ENCODE measurements at regions of chr22 and their contacts with region 1.

Region 1: DNA sequence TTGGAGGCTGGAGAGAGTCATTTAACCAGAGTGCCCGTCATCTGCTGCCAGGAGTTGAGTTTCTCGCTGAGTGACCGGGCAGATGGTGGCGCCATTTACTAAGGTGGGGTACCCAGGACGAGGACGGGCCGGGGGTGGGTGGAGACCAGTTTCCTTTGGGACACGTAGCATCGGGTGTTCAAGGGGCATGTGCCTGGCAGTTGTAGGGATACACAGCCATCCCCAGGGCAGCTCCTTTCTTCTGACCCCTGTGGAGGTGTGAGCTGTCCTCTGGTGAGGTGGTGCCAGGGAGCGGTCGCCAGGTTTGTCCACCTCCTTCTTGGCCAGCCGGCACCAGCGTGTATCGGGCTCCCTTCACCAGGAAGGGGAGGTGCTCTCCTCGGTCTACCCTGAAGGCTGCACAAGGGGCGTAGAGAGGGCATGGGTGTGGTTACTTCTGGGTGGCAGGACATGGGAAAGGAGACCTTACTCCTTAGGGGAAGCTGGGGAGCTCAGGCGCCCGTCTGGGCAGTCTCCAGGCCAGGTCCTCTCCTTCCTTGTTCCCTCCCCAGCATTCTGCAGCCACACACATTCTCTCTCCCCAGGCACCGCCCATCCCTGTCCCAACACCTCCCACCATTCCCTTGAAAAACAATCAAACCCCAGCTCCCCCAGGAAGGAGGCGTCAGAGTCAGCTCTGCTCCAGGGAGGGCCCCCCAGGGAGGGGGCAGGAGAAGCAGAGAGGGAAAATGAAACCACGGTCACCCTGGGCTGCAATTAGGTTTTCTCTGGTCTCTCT is 10.3 kb upstream of the MB start:
- DNase-seq: peak; percentile 40 to 73
- ATAC-seq: peak; percentile 50 to 54 (median 51)
- H3K4me3 ChIP-seq: peak overlapping the region; percentile 42
- H3K4me3 Mint-ChIP-seq: peak overlapping the region; percentile 79
- H3K27ac ChIP-seq: no peak overlapping the region
- H3K27ac Mint-ChIP-seq: peak overlapping the region in 1 of 2 donors; percentile 81
- H3K4me1 ChIP-seq: peaks cover 23% of the 10 kb centered on the region
- H3K4me1 Mint-ChIP-seq: peaks cover 20 to 32% of the 10 kb centered on the region in 2 donors
- H3K27me3 ChIP-seq: no peaks in the 10 kb centered on the region
- H3K27me3 Mint-ChIP-seq: peaks cover 0 to 6% of the 10 kb centered on the region in 2 donors
- CTCF ChIP-seq: peak; percentile 17

Region 2: DNA sequence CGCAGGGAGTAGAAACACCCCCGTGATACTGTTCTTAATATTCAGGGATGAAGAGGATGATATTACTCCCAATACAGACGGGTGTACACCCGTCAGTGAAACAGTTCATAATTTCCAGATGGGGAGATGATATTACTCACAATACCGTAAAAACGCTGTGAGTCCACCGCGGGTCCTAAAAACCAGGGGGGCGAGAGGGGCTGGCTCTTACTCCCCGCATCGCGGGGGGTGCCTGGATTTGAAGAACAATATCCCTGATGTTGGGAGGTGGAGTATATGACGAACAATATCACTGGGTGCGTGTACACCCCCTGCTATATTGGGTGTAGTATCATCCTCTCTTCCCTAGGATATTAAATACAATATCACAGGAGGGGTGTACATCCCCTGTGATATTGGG is 69.7 kb after region 1 on chr22:
- intact Hi-C with region 1: loop called (anchors 1 kb)
- DNase-seq: no peak
- ATAC-seq: no peak
- H3K4me3 ChIP-seq: no peak overlapping the region
- H3K4me3 Mint-ChIP-seq: no peak overlapping the region
- H3K27ac ChIP-seq: no peak overlapping the region
- H3K27ac Mint-ChIP-seq: no peak overlapping the region
- H3K4me1 ChIP-seq: no peaks in the 10 kb centered on the region
- H3K4me1 Mint-ChIP-seq: no peaks in the 10 kb centered on the region
- H3K27me3 ChIP-seq: no peaks in the 10 kb centered on the region
- H3K27me3 Mint-ChIP-seq: no peaks in the 10 kb centered on the region
- CTCF ChIP-seq: no peak

Region 3: GRCh38 chr22:35708453-35708852 is 81.0 kb after region 1 on chr22:
- intact Hi-C with region 1: no loop called
- DNase-seq: no peak
- ATAC-seq: no peak
- H3K4me3 ChIP-seq: no peak overlapping the region
- H3K4me3 Mint-ChIP-seq: no peak overlapping the region
- H3K27ac ChIP-seq: no peak overlapping the region
- H3K27ac Mint-ChIP-seq: no peak overlapping the region
- H3K4me1 ChIP-seq: no peaks in the 10 kb centered on the region
- H3K4me1 Mint-ChIP-seq: no peaks in the 10 kb centered on the region
- H3K27me3 ChIP-seq: no peaks in the 10 kb centered on the region
- H3K27me3 Mint-ChIP-seq: peaks cover 0 to 2% of the 10 kb centered on the region in 2 donors
- CTCF ChIP-seq: no peak

Region 4: DNA sequence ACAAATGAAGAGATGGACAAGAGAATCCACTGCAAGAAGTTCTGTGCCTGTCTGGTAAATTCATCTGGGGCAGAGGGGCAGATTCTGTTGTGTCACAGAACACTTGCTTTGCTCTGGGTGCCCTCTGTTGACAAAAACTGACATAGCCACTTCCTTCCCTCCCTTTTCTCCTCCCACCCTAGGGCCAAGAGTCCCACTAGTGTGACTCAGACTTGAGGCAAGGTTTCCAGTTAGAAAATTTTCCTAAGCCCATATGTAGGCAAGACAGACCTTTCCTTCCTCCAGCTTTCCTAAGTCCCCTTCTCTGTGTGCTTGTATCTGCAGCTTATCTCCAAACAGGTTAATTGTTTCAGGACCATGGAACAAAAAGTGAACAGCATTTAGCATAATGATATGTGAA is 294.3 kb after region 1 on chr22:
- intact Hi-C with region 1: loop called (anchors 2 kb)
- DNase-seq: peak in 1 of 2 donors; percentile 58
- ATAC-seq: peak in 2 of 3 donors; percentile 68 to 74
- H3K4me3 ChIP-seq: no peak overlapping the region
- H3K4me3 Mint-ChIP-seq: no peak overlapping the region
- H3K27ac ChIP-seq: no peak overlapping the region
- H3K27ac Mint-ChIP-seq: no peak overlapping the region
- H3K4me1 ChIP-seq: no peaks in the 10 kb centered on the region
- H3K4me1 Mint-ChIP-seq: no peaks in the 10 kb centered on the region
- H3K27me3 ChIP-seq: peaks cover 2% of the 10 kb centered on the region
- H3K27me3 Mint-ChIP-seq: peaks cover 0 to 3% of the 10 kb centered on the region in 2 donors
- CTCF ChIP-seq: peak; percentile 50

Region 5: DNA sequence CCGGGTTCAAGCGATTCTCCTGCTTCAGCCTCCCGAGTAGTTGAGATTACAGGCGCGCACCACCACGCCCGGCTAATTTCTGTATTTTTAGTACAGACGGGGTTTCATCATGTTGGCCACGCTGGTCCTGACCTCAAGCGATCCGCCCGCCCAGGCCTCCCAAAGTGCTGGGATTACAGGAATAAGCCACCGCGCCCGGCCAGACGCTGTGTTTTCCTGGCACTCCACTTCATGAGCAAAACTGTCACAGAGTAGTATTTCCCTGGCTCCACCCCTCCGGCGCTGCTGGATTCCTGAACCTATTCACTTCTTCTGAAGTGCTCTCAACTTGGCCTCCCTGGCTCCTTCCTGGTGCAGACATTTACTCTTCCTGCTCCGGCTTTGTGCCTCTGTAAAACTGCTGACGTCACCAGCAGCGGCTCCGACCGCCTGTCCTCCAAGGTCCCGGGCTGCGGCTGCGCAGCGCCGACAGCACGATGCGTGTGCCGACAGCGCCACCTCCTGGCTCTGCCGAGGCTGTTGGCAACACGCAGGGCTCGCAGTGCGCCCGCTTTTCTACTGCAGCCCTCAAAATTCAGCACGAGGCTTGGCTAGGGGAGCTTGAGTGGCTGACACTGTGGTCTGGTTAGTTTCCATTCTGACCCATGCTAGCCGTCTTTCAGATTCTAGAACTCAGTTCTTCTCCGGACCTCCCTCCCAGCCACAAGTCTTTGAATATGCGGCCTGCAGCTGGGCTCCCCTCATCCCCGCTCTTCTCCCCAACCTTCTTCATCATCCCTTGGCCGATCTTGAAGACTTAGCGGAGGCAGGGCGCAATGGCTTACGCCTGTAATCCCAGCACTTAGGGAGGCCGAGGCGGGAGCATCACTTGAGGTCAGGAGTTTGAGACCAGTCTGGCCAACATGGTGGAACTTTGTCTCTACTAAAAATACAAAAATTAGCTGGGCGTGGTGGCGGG is 496.5 kb after region 1 on chr22:
- intact Hi-C with region 1: loop called (anchors 2 kb)
- DNase-seq: peak; percentile 90 to 99
- ATAC-seq: peak; percentile 99
- H3K4me3 ChIP-seq: peak overlapping the region; percentile 44
- H3K4me3 Mint-ChIP-seq: peak overlapping the region; percentile 95
- H3K27ac ChIP-seq: peak overlapping the region; percentile 75
- H3K27ac Mint-ChIP-seq: peak overlapping the region; percentile 88 to 93
- H3K4me1 ChIP-seq: peaks cover 12% of the 10 kb centered on the region
- H3K4me1 Mint-ChIP-seq: peaks cover 8% of the 10 kb centered on the region in 2 donors
- H3K27me3 ChIP-seq: no peaks in the 10 kb centered on the region
- H3K27me3 Mint-ChIP-seq: peaks cover 0 to 3% of the 10 kb centered on the region in 2 donors
- CTCF ChIP-seq: peak; percentile 97

Measured in natural killer cell (primary cell).